ENCODE measurements at regions of chr5 and their contacts with region 1.

Region 1: GRCh38 chr5:114449860-114450421 is 88.1 kb downstream of the KCNN2 start:
- DNase-seq: peak; percentile 80
- ATAC-seq: peak; percentile 99

Region 2: DNA sequence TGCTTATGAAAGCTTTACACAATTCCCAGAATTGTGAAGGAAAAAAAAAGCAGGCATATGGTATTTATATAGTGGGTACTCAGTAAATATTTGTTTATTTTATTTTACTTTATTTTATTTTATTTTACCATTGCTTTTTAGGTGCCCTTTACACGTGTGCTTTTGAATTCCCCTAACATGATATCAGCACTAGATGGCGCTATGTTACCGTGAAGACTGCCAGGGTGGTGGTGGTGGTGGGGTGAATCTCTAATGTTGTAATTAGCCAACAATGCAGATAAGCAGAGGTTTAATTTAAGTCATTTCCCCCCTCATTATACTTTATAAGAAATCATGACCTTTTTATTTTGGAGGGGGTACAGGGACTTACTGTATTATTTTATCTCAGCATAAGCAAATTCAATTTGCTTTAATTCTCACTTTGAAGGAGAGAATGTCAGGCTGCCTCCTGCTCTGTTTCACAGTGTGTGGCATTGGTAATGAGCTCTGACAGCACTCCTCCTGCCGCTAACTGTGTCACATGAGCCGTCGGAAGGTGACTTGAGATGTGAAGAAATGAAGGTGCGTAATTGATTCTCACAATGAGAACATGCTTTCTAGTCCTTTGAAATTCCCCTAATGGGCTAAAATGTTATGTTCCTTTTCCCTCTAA is 770.9 kb before region 1 on chr5:
- intact Hi-C with region 1: loop called (anchors 5 kb)
- DNase-seq: no peak
- ATAC-seq: peak; percentile 87

Region 3: GRCh38 chr5:114018186-114018585 is 431.8 kb before region 1 on chr5:
- intact Hi-C with region 1: loop called (anchors 10 kb)
- DNase-seq: no peak
- ATAC-seq: peak; percentile 49

Region 4: DNA sequence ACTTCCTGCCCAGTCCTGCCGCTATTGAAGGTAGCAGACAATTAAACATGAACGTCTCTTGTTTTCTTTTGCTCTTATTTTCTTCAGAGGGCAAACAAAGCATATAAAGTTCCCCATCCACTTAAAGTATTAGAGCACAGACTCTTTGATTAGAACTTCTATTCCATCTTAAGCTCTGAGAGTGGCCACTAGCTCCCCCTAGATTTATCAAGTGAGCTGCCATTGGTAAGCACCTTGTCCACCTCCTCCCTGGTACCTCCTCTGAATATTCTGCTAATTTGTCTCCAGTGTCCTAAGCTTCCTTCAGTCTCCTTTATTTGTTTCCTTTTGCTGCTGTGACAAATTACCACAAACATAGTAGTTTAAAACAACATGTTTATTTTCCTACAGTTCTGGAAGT is 352.4 kb before region 1 on chr5:
- intact Hi-C with region 1: loop called (anchors 5 kb)
- DNase-seq: no peak
- ATAC-seq: no peak

Region 5: DNA sequence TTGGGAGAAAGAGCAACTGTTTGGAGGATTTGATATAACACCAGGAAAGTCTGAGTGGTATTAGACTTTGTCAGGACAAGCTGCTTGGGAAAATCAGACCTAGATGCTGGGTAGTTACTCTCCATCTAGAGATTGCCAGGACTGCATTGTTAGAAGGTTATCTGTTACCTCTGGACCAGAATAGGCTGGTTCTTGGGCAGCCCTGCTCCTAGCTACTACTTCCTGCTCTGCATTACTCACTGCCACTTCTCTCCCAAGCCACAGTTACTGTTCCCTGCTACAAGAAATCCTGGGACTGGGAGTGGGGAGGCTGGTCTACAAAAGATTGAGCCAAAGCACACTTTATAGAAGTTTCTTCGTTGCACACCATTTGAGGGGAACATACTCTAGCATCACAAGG is 183.6 kb before region 1 on chr5:
- intact Hi-C with region 1: no loop called
- DNase-seq: no peak
- ATAC-seq: no peak

Region 6: GRCh38 chr5:114305402-114306211 is 144.3 kb before region 1 on chr5:
- intact Hi-C with region 1: loop called (anchors 10 kb)
- DNase-seq: no peak
- ATAC-seq: peak; percentile 49

Region 7: GRCh38 chr5:114612406-114612805 is 162.5 kb after region 1 on chr5:
- intact Hi-C with region 1: no loop called
- DNase-seq: no peak
- ATAC-seq: no peak

Region 8: DNA sequence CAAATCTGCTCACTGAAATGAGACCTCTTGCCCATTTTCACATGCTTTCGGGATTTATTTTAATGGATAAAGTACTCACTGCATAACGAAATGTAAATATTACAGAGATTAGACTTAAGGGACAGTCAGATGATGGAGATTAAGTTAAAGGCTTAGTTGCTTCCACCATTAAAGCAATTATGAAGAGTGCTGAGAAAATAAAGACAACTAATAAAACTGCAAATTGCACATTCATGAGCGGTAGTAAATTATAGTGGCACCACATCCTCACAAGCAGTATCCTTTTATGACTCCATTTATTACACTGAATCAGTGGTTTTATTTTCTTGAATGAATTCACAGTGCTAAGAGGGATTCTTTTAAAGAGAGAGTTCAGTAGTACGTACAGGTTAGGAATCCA is 1252.1 kb after region 1 on chr5:
- intact Hi-C with region 1: no loop called
- DNase-seq: no peak
- ATAC-seq: no peak

Measured in Right ventricle myocardium superior (tissue), 1 donor.